Prostate gland (tissue), 2 donors: ENCODE measurements at regions of chr1 and their contacts with region 1.

Region 1: DNA sequence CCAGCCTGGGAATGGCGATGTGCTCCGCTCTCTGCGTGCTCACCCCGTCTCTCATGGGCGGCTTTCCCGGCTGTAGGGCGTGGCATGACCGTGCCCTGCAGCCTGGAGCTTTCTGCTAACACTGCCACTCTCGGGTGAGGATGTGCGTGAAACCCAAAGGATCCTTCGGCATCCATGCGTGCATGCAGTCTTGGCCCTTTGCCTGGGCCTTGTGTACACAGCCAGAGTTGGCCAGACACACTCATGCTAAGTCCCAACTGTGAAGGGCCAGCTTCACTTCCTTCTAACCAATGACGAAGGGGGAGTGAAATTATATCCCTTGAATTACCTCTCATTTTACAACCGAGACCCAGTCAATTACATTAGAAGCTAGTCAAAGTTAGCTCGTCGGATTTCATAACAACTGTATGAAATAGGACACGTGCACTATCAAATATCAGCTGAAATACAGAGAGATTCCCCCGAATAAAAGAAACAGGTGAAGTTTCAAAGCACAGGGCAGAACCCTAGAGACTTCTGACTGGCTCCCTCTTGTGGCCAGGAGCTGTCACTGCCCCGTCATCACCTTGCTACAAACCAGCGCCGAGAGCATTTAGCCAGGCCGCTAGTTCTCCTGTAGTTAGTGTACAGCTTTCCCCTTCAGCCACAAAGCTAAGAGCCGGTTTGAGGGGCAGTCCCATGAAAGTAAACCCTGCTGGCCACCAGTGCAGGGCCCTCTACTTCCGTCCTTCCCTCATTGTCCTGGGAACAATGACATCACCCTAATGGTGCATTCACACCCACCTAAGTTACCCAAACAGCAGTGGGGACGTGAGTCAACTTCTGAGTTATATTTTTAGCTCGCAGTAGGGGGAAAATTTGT is 63.4 kb upstream of the COA6 start:
- DNase-seq: peak; percentile 71
- H3K4me3 ChIP-seq: no peak overlapping the region
- H3K27ac ChIP-seq: no peak overlapping the region
- H3K4me1 ChIP-seq: no peaks in the 10 kb centered on the region
- H3K27me3 ChIP-seq: no peaks in the 10 kb centered on the region
- CTCF ChIP-seq: peak; percentile 53 to 78 (median 74)
- POLR2A ChIP-seq: no peak

Region 2: DNA sequence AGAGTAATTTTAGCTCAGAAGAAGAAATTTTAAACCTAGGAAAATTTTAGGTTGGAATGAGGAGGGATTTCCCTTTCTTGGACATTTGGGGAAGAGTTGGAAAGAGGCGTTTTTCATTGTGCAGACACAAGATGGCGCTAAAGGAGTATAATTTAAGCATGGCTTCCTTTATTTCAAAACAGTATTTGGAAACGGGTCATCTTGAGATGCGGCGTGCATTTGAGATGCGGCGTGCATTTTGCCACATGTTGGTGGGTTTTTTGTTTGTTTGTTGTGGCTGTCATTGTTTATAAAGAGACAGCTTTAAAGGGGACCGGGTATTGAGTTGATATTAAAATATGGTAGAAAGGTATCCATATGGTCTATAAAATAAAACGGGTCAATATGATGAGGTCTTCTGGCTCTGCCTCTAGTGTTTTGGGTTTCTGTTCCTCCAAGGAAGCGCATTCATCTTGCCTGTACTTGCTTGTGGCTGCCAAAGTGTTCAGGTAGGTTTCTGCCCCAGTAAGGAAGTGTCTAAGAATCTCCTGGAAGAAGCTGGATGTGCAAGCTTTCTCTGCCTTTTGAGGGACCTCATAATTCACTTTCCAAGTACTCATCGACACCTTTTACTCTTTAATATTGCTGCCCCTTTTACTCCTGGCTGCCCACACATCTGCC is 195.1 kb before region 1 on chr1:
- intact Hi-C with region 1: loop called (anchors 10 kb)
- DNase-seq: peak; percentile 19
- H3K4me3 ChIP-seq: no peak overlapping the region
- H3K27ac ChIP-seq: no peak overlapping the region
- H3K4me1 ChIP-seq: no peaks in the 10 kb centered on the region
- H3K27me3 ChIP-seq: no peaks in the 10 kb centered on the region
- CTCF ChIP-seq: peak in 3 of 4 experiments; percentile 48 to 58 (median 56)
- POLR2A ChIP-seq: no peak

Region 3: GRCh38 chr1:234933475-234933874 is 623.6 kb after region 1 on chr1:
- intact Hi-C with region 1: no loop called
- DNase-seq: no peak
- H3K4me3 ChIP-seq: no peak overlapping the region
- H3K27ac ChIP-seq: no peak overlapping the region
- H3K4me1 ChIP-seq: no peaks in the 10 kb centered on the region
- H3K27me3 ChIP-seq: no peaks in the 10 kb centered on the region
- CTCF ChIP-seq: no peak
- POLR2A ChIP-seq: no peak